Breast epithelium (tissue), 4 donors: ENCODE measurements at regions of chr10 and their contacts with region 1.

Region 1: DNA sequence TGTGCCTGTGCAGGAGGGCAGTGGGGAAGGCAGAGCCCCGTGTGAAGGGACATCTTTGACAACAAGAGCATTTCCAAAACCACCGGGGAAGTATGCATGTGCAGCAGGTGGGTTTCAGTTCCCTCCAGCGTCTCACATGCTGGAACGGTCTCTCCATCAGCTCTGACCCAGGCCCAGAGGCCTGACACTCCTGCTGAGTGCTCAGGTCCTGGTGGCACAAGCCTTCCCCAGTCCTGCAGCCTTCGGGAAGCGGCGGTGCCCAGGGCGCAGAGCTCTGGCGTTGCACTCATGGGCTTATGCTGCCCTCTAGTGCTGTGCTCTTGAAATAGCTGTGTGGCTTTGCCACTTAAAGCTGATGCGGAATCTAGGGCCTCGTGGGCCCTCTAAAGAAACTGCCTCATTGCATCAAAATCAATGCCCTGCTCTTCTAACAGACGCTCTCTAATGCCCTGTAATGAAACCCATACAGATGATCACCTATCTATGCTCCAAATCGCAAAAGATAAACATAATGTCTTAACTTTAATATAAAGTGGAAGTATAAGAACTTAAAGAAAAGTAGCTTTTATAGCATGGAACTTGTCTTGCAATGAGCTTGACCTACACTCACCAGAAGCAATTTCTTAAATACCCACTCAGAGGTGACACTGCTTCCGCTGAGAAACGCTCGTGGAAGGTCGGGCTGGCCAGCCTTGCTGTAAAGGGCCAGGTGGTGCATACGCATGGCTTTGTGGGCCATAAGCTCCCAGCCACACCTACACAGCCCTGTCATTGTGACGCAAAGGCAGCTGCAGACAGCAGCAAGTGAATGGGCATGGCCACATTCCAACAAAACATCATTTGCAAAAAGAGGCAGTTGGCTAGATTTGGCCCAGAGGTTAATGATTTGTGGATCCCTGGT is 38.6 kb downstream of the CLRN3 start:
- DNase-seq: no peak
- H3K4me3 ChIP-seq: no peak overlapping the region
- H3K27ac ChIP-seq: no peak overlapping the region
- H3K4me1 ChIP-seq: no peaks in the 10 kb centered on the region
- H3K27me3 ChIP-seq: no peaks in the 10 kb centered on the region
- CTCF ChIP-seq: peak in 2 of 3 donors; percentile 77 to 89
- POLR2A ChIP-seq: no peak

Region 2: GRCh38 chr10:127715782-127716378 is 138.2 kb before region 1 on chr10:
- intact Hi-C with region 1: loop called (anchors 10 kb)
- DNase-seq: no peak
- H3K4me3 ChIP-seq: no peak overlapping the region
- H3K27ac ChIP-seq: no peak overlapping the region
- H3K4me1 ChIP-seq: no peaks in the 10 kb centered on the region
- H3K27me3 ChIP-seq: no peaks in the 10 kb centered on the region
- CTCF ChIP-seq: peak in 2 of 3 donors; percentile 54 to 56
- POLR2A ChIP-seq: no peak

Region 3: DNA sequence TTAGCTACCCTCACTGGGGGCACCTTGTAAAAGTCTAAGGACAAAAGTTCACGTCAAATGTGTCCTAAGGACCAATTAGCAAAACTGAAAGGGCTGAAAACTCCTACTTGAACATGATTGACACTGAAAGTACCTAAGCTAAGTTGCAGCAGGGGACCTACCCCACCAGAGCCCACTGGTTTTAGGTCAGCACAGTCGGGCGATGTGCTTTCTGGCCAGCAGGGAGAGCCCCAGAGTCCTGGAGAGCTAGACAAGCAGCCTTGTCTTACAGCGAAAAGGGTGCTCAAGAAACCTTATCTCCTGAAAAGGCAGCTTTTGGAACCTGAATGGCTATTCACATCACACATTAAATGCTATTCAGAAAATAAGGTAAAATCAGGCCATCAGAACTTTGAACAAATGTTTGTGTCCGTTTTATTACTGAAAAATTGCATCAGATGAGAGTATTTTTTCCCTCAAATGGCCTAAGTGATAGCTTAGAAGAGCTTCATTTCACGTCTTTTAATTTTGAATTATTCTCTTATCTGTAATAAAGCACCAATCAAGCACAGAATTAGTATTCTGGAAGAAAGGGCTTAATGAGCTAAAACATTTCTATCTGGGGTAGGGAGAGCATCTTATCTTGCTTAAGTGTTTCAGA is 324.3 kb after region 1 on chr10:
- intact Hi-C with region 1: no loop called
- DNase-seq: no peak
- H3K4me3 ChIP-seq: no peak overlapping the region
- H3K27ac ChIP-seq: no peak overlapping the region
- H3K4me1 ChIP-seq: no peaks in the 10 kb centered on the region
- H3K27me3 ChIP-seq: no peaks in the 10 kb centered on the region
- CTCF ChIP-seq: no peak
- POLR2A ChIP-seq: no peak